Common myeloid progenitor, CD34-positive (primary cell): ENCODE measurements at regions of chr1 and their contacts with region 1.

Region 1: DNA sequence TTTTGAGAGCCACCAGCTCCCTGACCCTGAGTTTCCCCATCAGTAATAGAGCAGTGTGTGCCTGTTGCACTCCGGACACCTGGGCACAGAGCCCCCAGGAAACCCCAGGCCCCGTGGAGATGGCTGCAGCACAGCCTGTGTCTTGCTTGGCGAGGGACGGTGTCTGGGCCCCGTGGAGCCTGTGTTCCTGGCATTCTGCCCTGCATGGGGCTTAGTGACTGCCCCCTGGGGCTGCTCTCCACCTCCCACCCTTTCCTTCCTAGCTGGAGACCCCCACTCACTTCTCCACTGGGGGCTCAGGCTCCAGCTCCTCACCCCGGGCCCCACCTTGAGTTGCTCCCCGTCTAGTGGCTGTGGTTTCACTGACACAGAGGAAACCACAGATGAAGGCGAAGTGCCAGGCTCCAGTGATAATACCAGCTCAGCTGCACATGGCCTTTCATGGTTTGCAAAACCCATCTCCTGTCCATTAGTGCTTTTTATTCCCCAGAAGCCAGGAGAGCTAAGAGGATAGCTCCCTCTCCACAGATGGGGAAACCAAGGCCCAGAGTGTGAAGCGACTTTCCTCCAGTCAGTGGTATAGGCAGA is 39.5 kb downstream of the DMRTB1 start:
- DNase-seq: peak; percentile 38 to 76 (median 73)
- H3K4me3 ChIP-seq: peak overlapping the region in 1 of 7 experiments; percentile 29
- H3K27ac ChIP-seq: no peak overlapping the region
- H3K4me1 ChIP-seq: peaks cover 2 to 21% (median 14%) of the 10 kb centered on the region in 4 experiments
- H3K27me3 ChIP-seq: peaks cover 0 to 1% (median 0%) of the 10 kb centered on the region in 5 experiments

Region 2: DNA sequence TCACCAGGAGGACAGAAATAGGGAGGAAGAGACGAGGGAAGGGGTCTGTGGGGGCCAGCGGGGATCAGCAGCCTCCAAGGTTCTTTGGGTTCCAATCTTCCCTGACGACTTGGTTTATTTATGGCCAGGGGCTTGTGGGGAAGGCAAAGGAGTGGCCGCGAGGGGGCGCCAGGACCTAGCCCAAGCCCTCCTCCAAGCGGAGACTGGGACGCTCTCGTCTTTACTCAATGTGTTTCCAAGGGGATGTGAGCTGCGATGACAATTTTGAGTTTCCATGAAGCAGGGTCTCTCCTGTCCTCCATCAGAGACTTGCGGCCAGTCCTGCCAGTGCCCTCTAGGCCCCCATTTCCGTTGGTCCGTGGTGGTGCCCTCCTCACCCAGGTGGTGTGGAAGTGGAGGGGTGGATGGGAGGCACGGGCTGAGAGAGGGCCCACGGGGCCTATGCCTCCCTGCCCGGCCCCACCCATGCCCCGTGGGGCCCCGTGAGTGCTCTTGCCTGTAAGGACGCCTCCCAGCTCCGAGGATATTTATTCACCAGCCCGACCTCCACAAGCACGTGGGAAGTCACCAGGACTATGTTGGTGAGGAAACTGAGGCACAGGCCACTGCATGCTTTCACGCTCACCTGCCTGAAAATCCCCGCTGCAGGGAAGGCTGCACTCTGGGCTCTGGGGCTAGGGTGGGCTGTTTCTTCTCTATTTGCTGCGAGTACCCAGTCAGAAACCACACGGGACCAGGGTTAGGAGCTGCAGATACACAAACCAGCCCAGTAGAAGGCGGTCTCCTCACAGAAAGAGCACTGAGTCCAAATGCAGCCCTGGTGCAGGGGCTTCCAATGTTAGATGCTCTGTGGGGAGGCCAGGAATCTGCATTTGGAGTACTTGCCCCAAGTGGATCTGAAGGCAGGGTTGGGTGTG is 12.9 kb before region 1 on chr1:
- CTCF ChIA-PET with region 1: interaction called, 20 read pairs
- POLR2A ChIA-PET with region 1: no interaction called
- DNase-seq: peak; percentile 78 to 92 (median 87)
- H3K4me3 ChIP-seq: no peak overlapping the region
- H3K27ac ChIP-seq: no peak overlapping the region
- H3K4me1 ChIP-seq: peaks cover 0 to 5% (median 0%) of the 10 kb centered on the region in 4 experiments
- H3K27me3 ChIP-seq: peaks cover 0 to 2% (median 0%) of the 10 kb centered on the region in 5 experiments